B cell (primary cell): ENCODE measurements at regions of chr19 and their contacts with region 1.

Region 1: GRCh38 chr19:42283143-42284065 is 14.4 kb downstream of the CIC start:
- DNase-seq: peak; percentile 98
- ATAC-seq: peak; percentile 64
- H3K4me3 ChIP-seq: peak overlapping the region; percentile 41 to 72 (median 65)
- H3K4me3 Mint-ChIP-seq: no peak overlapping the region
- H3K27ac ChIP-seq: peak overlapping the region; percentile 91 to 96
- H3K27ac Mint-ChIP-seq: no peak overlapping the region
- H3K4me1 ChIP-seq: peaks cover 53 to 65% of the 10 kb centered on the region in 2 donors
- H3K4me1 Mint-ChIP-seq: peaks cover 37% of the 10 kb centered on the region
- H3K27me3 ChIP-seq: no peaks in the 10 kb centered on the region
- H3K27me3 Mint-ChIP-seq: no peaks in the 10 kb centered on the region
- CTCF ChIP-seq: no peak

Region 2: GRCh38 chr19:41479757-41480191 is 803.6 kb before region 1 on chr19:
- CTCF ChIA-PET with region 1: no interaction called
- POLR2A ChIA-PET with region 1: no interaction called
- intact Hi-C with region 1: no loop called
- DNase-seq: no peak
- ATAC-seq: no peak
- H3K4me3 ChIP-seq: no peak overlapping the region
- H3K4me3 Mint-ChIP-seq: no peak overlapping the region
- H3K27ac ChIP-seq: no peak overlapping the region
- H3K27ac Mint-ChIP-seq: no peak overlapping the region
- H3K4me1 ChIP-seq: peaks cover 10 to 11% of the 10 kb centered on the region in 2 donors
- H3K4me1 Mint-ChIP-seq: peaks cover 13% of the 10 kb centered on the region
- H3K27me3 ChIP-seq: peaks cover 0 to 13% (median 0%) of the 10 kb centered on the region in 4 experiments
- H3K27me3 Mint-ChIP-seq: peaks cover 24% of the 10 kb centered on the region
- CTCF ChIP-seq: no peak

Region 3: GRCh38 chr19:42088471-42089190 is 194.8 kb before region 1 on chr19:
- CTCF ChIA-PET with region 1: no interaction called
- POLR2A ChIA-PET with region 1: no interaction called
- intact Hi-C with region 1: no loop called
- DNase-seq: no peak
- ATAC-seq: no peak
- H3K4me3 ChIP-seq: no peak overlapping the region
- H3K4me3 Mint-ChIP-seq: peak overlapping the region; percentile 13
- H3K27ac ChIP-seq: peak overlapping the region in 1 of 2 donors; percentile 69
- H3K27ac Mint-ChIP-seq: peak overlapping the region; percentile 64
- H3K4me1 ChIP-seq: peaks cover 16 to 49% of the 10 kb centered on the region in 2 donors
- H3K4me1 Mint-ChIP-seq: peaks cover 51% of the 10 kb centered on the region
- H3K27me3 ChIP-seq: no peaks in the 10 kb centered on the region
- H3K27me3 Mint-ChIP-seq: no peaks in the 10 kb centered on the region
- CTCF ChIP-seq: no peak

Region 4: DNA sequence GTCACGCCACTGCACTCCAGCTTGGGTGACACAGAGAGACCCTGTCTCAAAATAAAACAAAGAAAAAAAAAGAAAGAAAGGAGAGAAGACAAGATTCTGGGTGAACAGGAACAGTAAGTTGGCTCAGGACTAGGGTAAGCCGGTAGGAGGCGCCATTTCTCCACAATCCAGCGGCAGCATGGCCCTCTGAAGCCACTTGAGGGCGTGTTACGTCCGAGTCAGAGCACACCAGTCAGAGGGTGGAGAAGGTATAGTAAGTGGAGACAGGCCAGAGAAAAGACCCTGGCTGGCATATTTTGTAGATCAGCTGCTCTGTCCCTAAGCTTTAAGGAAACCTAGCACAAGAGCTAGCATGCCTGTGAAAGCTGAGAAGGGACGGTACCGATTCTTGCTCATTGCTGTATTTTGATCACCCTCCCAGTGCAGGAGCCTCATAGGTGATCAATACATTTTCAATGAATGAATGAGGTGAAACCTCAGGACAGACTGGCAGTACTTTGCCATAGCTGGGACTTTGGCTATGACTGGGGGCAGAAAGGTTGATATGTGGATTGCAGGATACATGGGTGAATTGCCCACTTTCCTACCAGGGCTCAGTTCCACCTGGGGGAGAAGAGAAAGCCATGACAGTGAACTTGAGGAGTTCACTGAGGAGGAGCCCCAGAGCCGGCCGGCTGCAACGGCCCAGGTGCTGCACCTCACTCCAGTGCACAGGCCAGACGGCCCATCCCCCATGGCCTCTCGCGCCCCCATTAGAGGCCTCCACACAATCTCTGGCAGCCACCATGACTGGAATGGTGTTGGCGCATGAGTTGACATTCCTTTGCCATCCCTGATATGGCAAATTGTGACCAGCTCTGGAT is 174.6 kb before region 1 on chr19:
- CTCF ChIA-PET with region 1: interaction called, 25 read pairs
- POLR2A ChIA-PET with region 1: interaction called, 12 read pairs
- intact Hi-C with region 1: loop called (anchors 1 kb)
- DNase-seq: peak; percentile 92
- ATAC-seq: peak; percentile 98
- H3K4me3 ChIP-seq: no peak overlapping the region
- H3K4me3 Mint-ChIP-seq: peak overlapping the region; percentile 24
- H3K27ac ChIP-seq: peak overlapping the region in 1 of 2 donors; percentile 58
- H3K27ac Mint-ChIP-seq: peak overlapping the region; percentile 71
- H3K4me1 ChIP-seq: peaks cover 33 to 53% of the 10 kb centered on the region in 2 donors
- H3K4me1 Mint-ChIP-seq: peaks cover 57% of the 10 kb centered on the region
- H3K27me3 ChIP-seq: no peaks in the 10 kb centered on the region
- H3K27me3 Mint-ChIP-seq: no peaks in the 10 kb centered on the region
- CTCF ChIP-seq: peak; percentile 100

Region 5: DNA sequence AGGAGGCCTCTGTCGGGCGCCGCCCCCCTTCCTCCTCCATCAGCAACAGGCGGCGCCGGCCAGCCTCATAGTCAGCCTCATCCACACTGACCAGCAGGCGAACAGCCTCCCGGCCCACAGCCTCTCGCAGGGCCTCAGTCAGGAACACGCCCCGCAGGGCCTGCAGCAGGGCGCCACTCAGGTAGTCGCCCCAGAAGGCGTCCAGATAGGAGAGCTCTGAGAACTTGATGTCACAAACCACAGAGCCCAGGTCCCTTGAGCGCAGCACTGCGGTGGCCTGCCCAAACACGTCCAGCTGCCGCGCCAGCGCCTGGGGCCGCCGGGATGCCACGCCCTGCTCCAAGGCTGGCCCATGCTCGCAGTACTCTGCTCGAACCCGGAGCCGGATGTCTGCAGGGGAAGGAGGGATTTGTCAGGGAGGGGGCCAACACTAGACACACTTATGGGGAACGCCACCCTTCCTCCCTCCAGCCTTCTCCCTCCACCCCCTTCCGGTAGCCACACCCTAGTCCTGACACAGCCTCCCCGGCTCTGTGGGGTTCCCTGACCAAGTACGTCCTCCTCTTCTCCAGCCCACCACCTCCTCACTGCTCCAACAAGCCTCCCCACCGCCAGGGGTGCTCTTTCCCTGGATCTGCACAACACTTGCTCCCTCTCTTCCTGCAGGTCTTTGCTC is 83.8 kb before region 1 on chr19:
- CTCF ChIA-PET with region 1: interaction called, 4 read pairs
- POLR2A ChIA-PET with region 1: interaction called, 9 read pairs
- intact Hi-C with region 1: loop called (anchors 5 kb)
- DNase-seq: peak; percentile 70
- ATAC-seq: peak; percentile 37
- H3K4me3 ChIP-seq: peak overlapping the region; percentile 27 to 54 (median 44)
- H3K4me3 Mint-ChIP-seq: peak overlapping the region; percentile 77
- H3K27ac ChIP-seq: peak overlapping the region; percentile 91 to 94
- H3K27ac Mint-ChIP-seq: peak overlapping the region; percentile 92
- H3K4me1 ChIP-seq: peaks cover 70 to 84% of the 10 kb centered on the region in 2 donors
- H3K4me1 Mint-ChIP-seq: peaks cover 82% of the 10 kb centered on the region
- H3K27me3 ChIP-seq: no peaks in the 10 kb centered on the region
- H3K27me3 Mint-ChIP-seq: no peaks in the 10 kb centered on the region
- CTCF ChIP-seq: peak; percentile 32

Region 6: DNA sequence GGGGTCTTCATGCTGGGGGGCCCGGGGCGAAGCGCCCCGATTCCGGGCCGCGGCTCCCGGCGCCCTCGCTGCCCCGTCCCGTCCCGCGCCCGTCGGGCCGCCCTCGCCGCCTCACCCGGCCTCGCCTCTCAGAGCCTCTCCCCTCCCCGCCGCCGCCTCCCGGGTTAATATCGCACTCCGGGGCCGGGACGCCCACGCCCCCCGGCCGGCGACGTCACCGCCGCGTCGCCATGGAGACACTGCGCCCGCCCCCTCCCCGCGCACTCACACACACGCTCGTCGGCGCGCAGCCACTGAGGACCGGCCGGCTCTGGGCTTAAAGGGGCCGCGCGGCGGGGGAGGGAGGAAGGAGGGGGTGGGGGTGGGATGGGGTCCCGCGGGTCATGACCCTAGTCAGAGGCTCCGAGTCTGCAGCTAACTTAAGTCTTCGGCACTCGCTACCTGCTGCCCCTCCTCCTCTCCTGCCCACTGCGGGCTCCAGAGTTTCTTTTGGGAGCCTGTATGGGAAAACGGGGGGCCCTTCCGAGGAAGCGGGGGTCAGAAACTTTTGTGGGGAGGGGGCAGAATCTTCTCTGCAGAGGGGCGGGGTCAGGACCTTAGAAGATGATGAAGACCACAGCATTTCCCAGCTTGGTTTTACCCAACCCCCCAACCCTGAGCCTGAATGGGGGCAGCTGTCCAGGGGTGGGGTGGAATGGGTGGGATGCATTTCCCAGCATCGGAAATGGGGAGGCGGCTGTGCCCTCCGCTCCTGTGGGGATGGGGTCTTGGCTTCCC is 28.2 kb before region 1 on chr19 and contains the start of gene ERF:
- CTCF ChIA-PET with region 1: interaction called, 14 read pairs
- POLR2A ChIA-PET with region 1: interaction called, 4 read pairs
- intact Hi-C with region 1: loop called (anchors 1 kb)
- DNase-seq: peak; percentile 97
- ATAC-seq: peak; percentile 68
- H3K4me3 ChIP-seq: peak within 1 kb of the TSS; percentile 36 to 100 (median 99)
- H3K4me3 Mint-ChIP-seq: peak within 1 kb of the TSS; percentile 85
- H3K27ac ChIP-seq: peak within 1 kb of the TSS; percentile 85 to 94
- H3K27ac Mint-ChIP-seq: peak within 1 kb of the TSS; percentile 96
- H3K4me1 ChIP-seq: peaks cover 23 to 41% of the 10 kb centered on the region in 2 donors
- H3K4me1 Mint-ChIP-seq: peaks cover 24% of the 10 kb centered on the region
- H3K27me3 ChIP-seq: peaks cover 0 to 4% (median 0%) of the 10 kb centered on the region in 4 experiments
- H3K27me3 Mint-ChIP-seq: no peaks in the 10 kb centered on the region
- CTCF ChIP-seq: no peak
- total RNA-seq, gene ERF: 48.6 and 62.1 TPM in 2 replicates

Region 7: DNA sequence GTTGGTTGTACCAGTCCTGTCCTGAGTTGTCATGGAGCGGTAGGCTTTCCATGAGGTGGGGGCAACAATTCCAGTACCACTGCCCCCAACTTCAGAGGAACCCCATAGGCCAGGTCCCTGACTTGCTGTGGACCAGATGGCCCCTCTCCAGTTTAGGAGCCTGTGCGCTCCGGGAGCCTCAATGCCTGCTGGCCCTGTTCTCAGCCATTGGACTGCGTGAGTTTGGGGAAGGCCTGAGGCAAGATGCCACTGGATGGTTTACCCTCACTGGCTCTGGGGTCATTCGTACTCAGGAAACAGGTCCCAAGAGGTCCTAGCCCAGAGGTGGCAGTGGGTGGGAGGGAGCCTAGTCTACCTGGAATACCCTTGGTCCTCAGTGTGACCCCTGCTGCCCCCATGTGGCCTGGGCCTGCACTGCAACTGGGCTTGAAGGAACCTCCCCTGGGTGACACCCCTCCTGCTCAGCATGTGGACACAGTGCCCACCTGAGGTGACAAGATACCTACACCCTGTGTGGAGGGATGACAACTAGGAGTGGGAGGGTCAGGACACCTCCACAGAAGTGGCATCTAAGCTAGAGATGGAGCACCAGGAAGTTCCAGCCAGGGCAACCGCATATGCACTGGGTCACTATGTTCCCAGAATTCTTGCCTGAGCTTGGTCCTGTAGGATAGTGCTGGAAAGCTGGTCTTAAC is 12.6 kb after region 1 on chr19:
- CTCF ChIA-PET with region 1: interaction called, 4 read pairs
- POLR2A ChIA-PET with region 1: no interaction called
- intact Hi-C with region 1: loop called (anchors 1 kb)
- DNase-seq: peak; percentile 89
- ATAC-seq: peak; percentile 98
- H3K4me3 ChIP-seq: no peak overlapping the region
- H3K4me3 Mint-ChIP-seq: no peak overlapping the region
- H3K27ac ChIP-seq: no peak overlapping the region
- H3K27ac Mint-ChIP-seq: peak overlapping the region; percentile 71
- H3K4me1 ChIP-seq: peaks cover 3 to 10% of the 10 kb centered on the region in 2 donors
- H3K4me1 Mint-ChIP-seq: peaks cover 11% of the 10 kb centered on the region
- H3K27me3 ChIP-seq: no peaks in the 10 kb centered on the region
- H3K27me3 Mint-ChIP-seq: no peaks in the 10 kb centered on the region
- CTCF ChIP-seq: peak; percentile 91

Region 8: GRCh38 chr19:42423462-42424344 is 140.3 kb after region 1 on chr19:
- CTCF ChIA-PET with region 1: interaction called, 4 read pairs
- POLR2A ChIA-PET with region 1: interaction called, 3 read pairs
- intact Hi-C with region 1: loop called (anchors 1 kb)
- DNase-seq: peak; percentile 96
- ATAC-seq: peak; percentile 88
- H3K4me3 ChIP-seq: peak overlapping the region; percentile 75 to 98 (median 85)
- H3K4me3 Mint-ChIP-seq: peak overlapping the region; percentile 98
- H3K27ac ChIP-seq: peak overlapping the region; percentile 78 to 85
- H3K27ac Mint-ChIP-seq: peak overlapping the region; percentile 99
- H3K4me1 ChIP-seq: peaks cover 22 to 40% of the 10 kb centered on the region in 2 donors
- H3K4me1 Mint-ChIP-seq: peaks cover 46% of the 10 kb centered on the region
- H3K27me3 ChIP-seq: peaks cover 0 to 2% (median 0%) of the 10 kb centered on the region in 4 experiments
- H3K27me3 Mint-ChIP-seq: no peaks in the 10 kb centered on the region
- CTCF ChIP-seq: no peak